H1 (cell line): ENCODE measurements at regions of chr1 and their contacts with region 1.

Region 1: GRCh38 chr1:160031365-160032164 is at the start of gene PIGM:
- DNase-seq: peak; percentile 91 to 95
- H3K4me3 ChIP-seq: peak within 1 kb of the TSS; percentile 72 to 88 (median 80)
- H3K27ac ChIP-seq: peak within 1 kb of the TSS; percentile 72
- H3K4me1 ChIP-seq: peaks cover 0 to 6% (median 2%) of the 10 kb centered on the region in 4 experiments; a peak in 5 of 7 replicates
- H3K27me3 ChIP-seq: no peaks in the 10 kb centered on the region; a peak in 2 of 7 replicates
- CTCF ChIP-seq: no peak
- EP300 ChIP-seq: peak in 1 of 2 experiments; percentile 63; a peak in 1 of 3 replicates
- POLR2A ChIP-seq: peak in 1 of 2 experiments; percentile 76; a peak in 2 of 3 replicates
- RAD21 ChIP-seq: no peak
- total RNA-seq, gene PIGM: 5.1 and 5.4 TPM in 2 replicates

Region 2: GRCh38 chr1:159991513-159991912 is 40.1 kb before region 1 on chr1:
- CTCF ChIA-PET with region 1: no interaction called
- POLR2A ChIA-PET with region 1: no interaction called
- DNase-seq: peak in 1 of 2 experiments; percentile 36
- H3K4me3 ChIP-seq: no peak overlapping the region
- H3K27ac ChIP-seq: no peak overlapping the region
- H3K4me1 ChIP-seq: no peaks in the 10 kb centered on the region
- H3K27me3 ChIP-seq: no peaks in the 10 kb centered on the region
- CTCF ChIP-seq: no peak
- EP300 ChIP-seq: no peak
- POLR2A ChIP-seq: no peak
- RAD21 ChIP-seq: no peak

Region 3: GRCh38 chr1:160046494-160047110 is 15.0 kb after region 1 on chr1:
- CTCF ChIA-PET with region 1: interaction called, 1,874 read pairs
- POLR2A ChIA-PET with region 1: interaction called, 18 read pairs
- DNase-seq: peak in 1 of 2 experiments; percentile 76
- H3K4me3 ChIP-seq: peak overlapping the region in 1 of 4 experiments; percentile 14; a peak in 2 of 8 replicates
- H3K27ac ChIP-seq: no peak overlapping the region
- H3K4me1 ChIP-seq: peaks cover 10 to 24% (median 16%) of the 10 kb centered on the region in 4 experiments
- H3K27me3 ChIP-seq: no peaks in the 10 kb centered on the region; a peak in 1 of 7 replicates
- CTCF ChIP-seq: peak; percentile 45 to 76 (median 69)
- EP300 ChIP-seq: peak in 1 of 2 experiments; percentile 17; a peak in 2 of 3 replicates
- POLR2A ChIP-seq: no peak
- RAD21 ChIP-seq: peak; percentile 71 to 80

Region 4: GRCh38 chr1:160058087-160058486 is 26.5 kb after region 1 on chr1:
- CTCF ChIA-PET with region 1: interaction called, 1,874 read pairs
- POLR2A ChIA-PET with region 1: no interaction called
- DNase-seq: no peak
- H3K4me3 ChIP-seq: no peak overlapping the region
- H3K27ac ChIP-seq: no peak overlapping the region
- H3K4me1 ChIP-seq: peaks cover 0 to 17% (median 12%) of the 10 kb centered on the region in 4 experiments; a peak in 6 of 7 replicates
- H3K27me3 ChIP-seq: peaks cover 0 to 4% (median 1%) of the 10 kb centered on the region in 4 experiments; a peak in 3 of 7 replicates
- CTCF ChIP-seq: peak; percentile 40 to 60 (median 52)
- EP300 ChIP-seq: no peak
- POLR2A ChIP-seq: no peak
- RAD21 ChIP-seq: peak; percentile 45 to 61

Region 5: GRCh38 chr1:160078512-160079195 is 47.1 kb after region 1 on chr1:
- CTCF ChIA-PET with region 1: interaction called, 1,874 read pairs
- POLR2A ChIA-PET with region 1: no interaction called
- DNase-seq: peak in 1 of 2 experiments; percentile 90
- H3K4me3 ChIP-seq: no peak overlapping the region
- H3K27ac ChIP-seq: no peak overlapping the region
- H3K4me1 ChIP-seq: no peaks in the 10 kb centered on the region
- H3K27me3 ChIP-seq: peaks cover 0 to 33% (median 20%) of the 10 kb centered on the region in 4 experiments; a peak in 6 of 7 replicates
- CTCF ChIP-seq: peak; percentile 91 to 95 (median 93)
- EP300 ChIP-seq: no peak
- POLR2A ChIP-seq: no peak
- RAD21 ChIP-seq: peak; percentile 75 to 84